Caco-2 (cell line): ENCODE measurements at regions of chr12 and their contacts with region 1.

Region 1: GRCh38 chr12:39443081-39443928 is at the start of gene KIF21A:
- DNase-seq: peak; percentile 95 to 99
- H3K4me3 ChIP-seq: peak within 1 kb of the TSS; percentile 70
- H3K4me3 Mint-ChIP-seq: peak within 1 kb of the TSS; percentile 99
- H3K27ac Mint-ChIP-seq: peak within 1 kb of the TSS; percentile 96
- H3K4me1 ChIP-seq: peaks cover 31% of the 10 kb centered on the region
- H3K4me1 Mint-ChIP-seq: peaks cover 9% of the 10 kb centered on the region
- H3K27me3 ChIP-seq: no peaks in the 10 kb centered on the region
- H3K27me3 Mint-ChIP-seq: no peaks in the 10 kb centered on the region
- CTCF ChIP-seq: peak; percentile 54 to 77
- total RNA-seq, gene KIF21A: 67.8 and 77.5 TPM in 2 replicates

Region 2: GRCh38 chr12:38892090-38892786 is 551.1 kb before region 1 on chr12:
- CTCF ChIA-PET with region 1: no interaction called
- POLR2A ChIA-PET with region 1: no interaction called
- intact Hi-C with region 1: loop called (anchors 10 kb)
- DNase-seq: peak; percentile 89 to 94
- H3K4me3 ChIP-seq: no peak overlapping the region
- H3K4me3 Mint-ChIP-seq: peak overlapping the region; percentile 74
- H3K27ac Mint-ChIP-seq: peak overlapping the region; percentile 97
- H3K4me1 ChIP-seq: peaks cover 40% of the 10 kb centered on the region
- H3K4me1 Mint-ChIP-seq: peaks cover 41% of the 10 kb centered on the region
- H3K27me3 ChIP-seq: no peaks in the 10 kb centered on the region
- H3K27me3 Mint-ChIP-seq: no peaks in the 10 kb centered on the region
- CTCF ChIP-seq: no peak

Region 3: DNA sequence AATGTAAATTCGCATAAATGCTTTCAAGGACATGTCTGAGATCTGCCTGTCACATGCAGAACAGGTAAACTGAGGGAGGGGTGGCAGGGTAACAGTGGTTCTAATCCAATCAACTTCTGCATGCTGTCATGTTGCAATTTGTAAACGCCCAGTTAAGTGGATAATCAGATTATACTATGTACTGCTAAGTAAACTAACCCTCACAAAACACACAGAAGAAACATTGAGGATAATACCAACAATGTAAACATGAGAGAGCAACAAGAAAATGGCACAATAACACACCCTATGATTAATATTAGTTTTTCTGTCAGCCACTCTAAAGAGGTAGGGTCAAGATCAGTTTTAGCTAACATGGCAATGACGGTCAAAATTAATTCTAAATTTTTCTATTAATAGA is 124.1 kb before region 1 on chr12:
- CTCF ChIA-PET with region 1: interaction called, 3 read pairs
- POLR2A ChIA-PET with region 1: no interaction called
- intact Hi-C with region 1: loop called (anchors 1 kb)
- DNase-seq: no peak
- H3K4me3 ChIP-seq: no peak overlapping the region
- H3K4me3 Mint-ChIP-seq: no peak overlapping the region
- H3K27ac Mint-ChIP-seq: no peak overlapping the region
- H3K4me1 ChIP-seq: no peaks in the 10 kb centered on the region
- H3K4me1 Mint-ChIP-seq: no peaks in the 10 kb centered on the region
- H3K27me3 ChIP-seq: no peaks in the 10 kb centered on the region
- H3K27me3 Mint-ChIP-seq: no peaks in the 10 kb centered on the region
- CTCF ChIP-seq: no peak

Region 4: DNA sequence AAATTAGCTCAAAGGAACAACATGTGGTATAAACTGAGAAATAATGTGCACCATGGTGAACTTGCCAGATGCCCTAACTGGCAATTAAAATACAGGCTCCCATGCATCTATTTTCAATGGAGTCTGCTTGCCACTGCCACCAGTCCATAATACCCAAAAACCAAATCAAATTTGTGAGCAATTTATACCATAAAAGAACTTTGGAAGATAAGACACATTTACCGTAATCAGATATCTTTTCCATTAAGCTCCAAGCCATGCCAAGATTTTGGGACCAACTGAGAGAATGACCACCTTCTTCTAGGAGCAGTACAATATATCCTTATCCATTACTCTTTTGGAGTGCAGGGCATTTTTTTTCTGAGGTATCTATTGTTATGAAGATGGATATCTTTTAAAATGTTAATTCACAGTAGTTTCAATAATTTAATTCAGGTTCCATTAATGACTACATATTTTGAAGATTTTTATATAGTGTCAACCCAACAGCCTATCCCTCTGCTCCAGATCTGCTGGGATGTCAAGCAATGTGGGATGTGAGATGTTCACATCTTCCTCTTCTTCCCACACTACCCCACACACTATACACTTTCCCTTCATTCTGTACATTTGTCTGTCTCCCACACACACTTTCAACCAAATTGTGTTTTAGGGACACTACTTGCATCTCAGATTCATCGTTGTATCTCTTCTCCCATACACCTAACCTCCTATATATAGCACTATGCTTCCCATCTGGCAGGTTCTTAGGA is 53.7 kb before region 1 on chr12:
- CTCF ChIA-PET with region 1: no interaction called
- POLR2A ChIA-PET with region 1: interaction called, 7 read pairs
- intact Hi-C with region 1: loop called (anchors 2 kb)
- DNase-seq: no peak
- H3K4me3 ChIP-seq: no peak overlapping the region
- H3K4me3 Mint-ChIP-seq: no peak overlapping the region
- H3K27ac Mint-ChIP-seq: no peak overlapping the region
- H3K4me1 ChIP-seq: peaks cover 10% of the 10 kb centered on the region
- H3K4me1 Mint-ChIP-seq: peaks cover 20% of the 10 kb centered on the region
- H3K27me3 ChIP-seq: no peaks in the 10 kb centered on the region
- H3K27me3 Mint-ChIP-seq: no peaks in the 10 kb centered on the region
- CTCF ChIP-seq: no peak

Region 5: DNA sequence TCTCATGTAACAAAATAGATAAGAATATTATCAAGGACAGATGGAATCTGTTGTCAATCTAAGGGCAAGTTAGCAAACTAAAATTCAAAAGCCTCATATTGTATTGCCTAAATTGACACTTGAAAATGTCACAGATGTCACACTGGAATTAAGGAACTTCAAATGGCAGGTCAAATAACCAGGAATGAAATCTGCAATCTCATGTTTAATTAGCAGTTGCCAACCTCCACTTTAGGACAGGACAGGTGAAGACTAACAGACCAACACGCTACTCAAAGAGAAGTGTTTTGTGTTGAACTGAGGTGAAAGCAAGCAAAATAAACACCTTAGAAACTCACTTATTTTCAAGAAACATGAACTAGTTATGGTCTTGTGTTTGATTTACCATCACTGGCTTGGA is 11.5 kb before region 1 on chr12:
- CTCF ChIA-PET with region 1: no interaction called
- POLR2A ChIA-PET with region 1: no interaction called
- intact Hi-C with region 1: loop called (anchors 1 kb)
- DNase-seq: no peak
- H3K4me3 ChIP-seq: no peak overlapping the region
- H3K4me3 Mint-ChIP-seq: no peak overlapping the region
- H3K27ac Mint-ChIP-seq: no peak overlapping the region
- H3K4me1 ChIP-seq: peaks cover 26% of the 10 kb centered on the region
- H3K4me1 Mint-ChIP-seq: peaks cover 15% of the 10 kb centered on the region
- H3K27me3 ChIP-seq: no peaks in the 10 kb centered on the region
- H3K27me3 Mint-ChIP-seq: no peaks in the 10 kb centered on the region
- CTCF ChIP-seq: no peak

Region 6: GRCh38 chr12:39574785-39575492 is 131.6 kb after region 1 on chr12:
- CTCF ChIA-PET with region 1: no interaction called
- POLR2A ChIA-PET with region 1: no interaction called
- intact Hi-C with region 1: no loop called
- DNase-seq: no peak
- H3K4me3 ChIP-seq: no peak overlapping the region
- H3K4me3 Mint-ChIP-seq: no peak overlapping the region
- H3K27ac Mint-ChIP-seq: no peak overlapping the region
- H3K4me1 ChIP-seq: no peaks in the 10 kb centered on the region
- H3K4me1 Mint-ChIP-seq: peaks cover 11% of the 10 kb centered on the region
- H3K27me3 ChIP-seq: no peaks in the 10 kb centered on the region
- H3K27me3 Mint-ChIP-seq: no peaks in the 10 kb centered on the region
- CTCF ChIP-seq: no peak

Region 7: GRCh38 chr12:39587225-39587624 is 143.9 kb after region 1 on chr12:
- CTCF ChIA-PET with region 1: no interaction called
- POLR2A ChIA-PET with region 1: no interaction called
- intact Hi-C with region 1: no loop called
- DNase-seq: no peak
- H3K4me3 ChIP-seq: no peak overlapping the region
- H3K4me3 Mint-ChIP-seq: no peak overlapping the region
- H3K27ac Mint-ChIP-seq: no peak overlapping the region
- H3K4me1 ChIP-seq: 0 out of 2 replicates have a peak, but pooled peaks cover 3% of the 10 kb centered on the region
- H3K4me1 Mint-ChIP-seq: no peaks in the 10 kb centered on the region
- H3K27me3 ChIP-seq: no peaks in the 10 kb centered on the region
- H3K27me3 Mint-ChIP-seq: peaks cover 3% of the 10 kb centered on the region
- CTCF ChIP-seq: peak in 1 of 2 experiments; percentile 43

Region 8: DNA sequence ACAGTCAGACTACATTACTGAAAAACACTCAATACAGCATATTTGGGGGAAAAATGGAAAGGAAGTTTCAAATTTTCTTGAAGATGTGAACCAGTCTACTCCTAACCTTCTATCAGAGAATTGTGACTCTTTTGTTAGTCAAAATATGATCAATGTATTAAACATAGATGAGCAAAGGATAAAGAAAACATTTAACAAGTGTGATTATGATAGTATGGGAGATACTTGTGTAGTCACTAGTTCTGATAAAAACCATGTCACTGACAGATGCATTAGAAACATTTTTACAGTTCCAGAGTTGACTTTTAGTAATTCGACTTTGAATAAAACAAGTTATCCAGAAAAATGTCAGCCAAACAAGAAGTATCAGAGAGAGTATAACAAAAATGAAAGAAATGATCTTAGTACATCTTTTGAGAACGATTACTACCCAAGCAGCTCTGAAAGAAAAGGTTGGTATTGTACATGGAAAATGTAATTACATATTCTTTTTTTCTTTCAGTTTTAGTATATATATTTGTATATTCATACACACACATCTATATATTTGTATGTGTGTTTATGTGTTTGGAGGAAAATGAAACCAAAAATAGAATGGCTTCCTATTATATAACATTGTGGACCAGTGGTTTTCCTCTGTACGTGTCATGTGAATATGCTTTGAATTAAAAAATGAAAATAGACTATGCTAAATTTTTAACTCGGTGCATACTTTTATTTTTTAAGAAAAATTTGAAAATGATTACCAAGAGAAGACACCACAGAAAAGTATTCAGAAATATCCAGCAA is 239.6 kb after region 1 on chr12:
- CTCF ChIA-PET with region 1: no interaction called
- POLR2A ChIA-PET with region 1: no interaction called
- intact Hi-C with region 1: loop called (anchors 10 kb)
- DNase-seq: no peak
- H3K4me3 ChIP-seq: no peak overlapping the region
- H3K4me3 Mint-ChIP-seq: no peak overlapping the region
- H3K27ac Mint-ChIP-seq: no peak overlapping the region
- H3K4me1 ChIP-seq: no peaks in the 10 kb centered on the region
- H3K4me1 Mint-ChIP-seq: no peaks in the 10 kb centered on the region
- H3K27me3 ChIP-seq: no peaks in the 10 kb centered on the region
- H3K27me3 Mint-ChIP-seq: peaks cover 1% of the 10 kb centered on the region
- CTCF ChIP-seq: no peak